AG04450 (cell line): ENCODE measurements at regions of chr3 and their contacts with region 1.

Region 1: GRCh38 chr3:143895805-143896204 is 47.5 kb upstream of the SLC9A9 start:
- DNase-seq: no peak
- H3K4me3 ChIP-seq: no peak overlapping the region
- H3K27ac ChIP-seq: no peak overlapping the region
- H3K27me3 ChIP-seq: no peaks in the 10 kb centered on the region
- CTCF ChIP-seq: peak; percentile 43

Region 2: DNA sequence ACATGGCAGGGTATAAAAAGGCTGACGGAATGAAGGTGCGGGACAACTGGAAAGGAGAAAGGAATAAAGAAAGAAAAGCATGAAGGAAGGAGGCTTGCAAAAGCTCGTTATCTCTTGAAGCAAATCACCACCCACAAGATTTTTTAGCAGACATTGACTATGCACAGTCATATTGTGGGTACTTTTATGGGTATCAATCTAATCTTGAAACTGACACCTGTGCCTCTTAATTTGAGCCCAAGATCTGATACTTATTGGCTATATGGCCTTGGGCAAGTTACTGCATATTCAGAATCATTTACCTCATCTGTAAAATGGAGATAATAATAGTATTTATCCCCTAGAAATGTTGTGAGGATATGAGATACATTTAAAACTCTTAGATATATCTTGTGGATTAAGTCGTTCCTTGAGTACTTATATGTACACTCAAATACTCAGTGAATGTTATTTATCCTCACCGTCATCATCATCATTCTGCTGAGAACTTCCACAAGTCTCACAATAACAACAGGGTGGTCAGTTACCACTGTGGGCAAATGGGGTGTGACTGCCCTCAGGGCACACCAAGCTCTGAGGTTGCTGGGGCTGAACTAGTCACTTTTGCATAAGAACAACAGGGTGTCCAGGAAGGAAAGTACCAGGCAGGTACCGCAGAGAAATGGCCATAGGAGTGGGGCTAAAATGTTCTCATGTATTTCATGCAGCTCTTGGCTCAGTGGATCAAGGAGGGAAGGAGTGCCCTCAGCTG is 313.7 kb before region 1 on chr3:
- CTCF ChIA-PET with region 1: no interaction called
- POLR2A ChIA-PET with region 1: no interaction called
- DNase-seq: no peak
- H3K4me3 ChIP-seq: no peak overlapping the region
- H3K27ac ChIP-seq: no peak overlapping the region
- H3K27me3 ChIP-seq: no peaks in the 10 kb centered on the region
- CTCF ChIP-seq: no peak

Region 3: GRCh38 chr3:143786219-143787191 is 109.3 kb before region 1 on chr3:
- CTCF ChIA-PET with region 1: no interaction called
- POLR2A ChIA-PET with region 1: no interaction called
- DNase-seq: no peak
- H3K4me3 ChIP-seq: peak overlapping the region; percentile 29
- H3K27ac ChIP-seq: peak overlapping the region; percentile 58
- H3K27me3 ChIP-seq: no peaks in the 10 kb centered on the region
- CTCF ChIP-seq: no peak

Region 4: DNA sequence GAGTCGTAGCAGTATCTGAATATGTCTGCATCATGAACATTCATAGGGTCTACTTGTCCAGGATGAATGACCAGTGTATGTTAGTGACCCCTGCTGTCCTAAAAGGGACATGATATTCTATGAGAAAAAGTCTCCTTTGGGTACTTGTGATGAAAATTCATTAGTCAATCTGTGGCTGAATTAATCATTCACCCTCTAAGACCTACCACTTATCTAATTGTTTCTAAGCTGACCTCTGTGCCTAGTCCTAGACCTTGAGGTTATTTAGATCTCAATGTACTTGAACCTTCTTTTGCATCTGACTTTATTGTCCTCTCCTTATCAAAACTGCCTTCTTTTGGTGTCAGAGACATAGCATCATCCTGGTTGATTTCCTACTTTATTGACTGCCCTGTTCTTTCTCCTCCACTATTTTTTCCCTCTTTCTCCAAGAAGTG is 875.1 kb after region 1 on chr3:
- CTCF ChIA-PET with region 1: interaction called, 11 read pairs
- POLR2A ChIA-PET with region 1: no interaction called
- DNase-seq: peak; percentile 10
- H3K4me3 ChIP-seq: no peak overlapping the region
- H3K27ac ChIP-seq: no peak overlapping the region
- H3K27me3 ChIP-seq: no peaks in the 10 kb centered on the region
- CTCF ChIP-seq: peak; percentile 57